HCT116 (cell line): ENCODE measurements at regions of chr12 and their contacts with region 1.

Region 1: GRCh38 chr12:114668151-114668885 is 15.7 kb downstream of the TBX3 start:
- DNase-seq: peak; percentile 61
- ATAC-seq: peak; percentile 96
- H3K4me3 ChIP-seq: peak overlapping the region; percentile 35 to 54
- H3K27ac ChIP-seq: no peak overlapping the region
- H3K4me1 ChIP-seq: peaks cover 2 to 13% of the 10 kb centered on the region in 2 experiments; a peak in 2 of 4 replicates
- H3K27me3 ChIP-seq: no peaks in the 10 kb centered on the region
- CTCF ChIP-seq: peak; percentile 54 to 69 (median 58)
- POLR2A ChIP-seq: no peak
- RAD21 ChIP-seq: peak; percentile 93

Region 2: GRCh38 chr12:115398311-115398781 is 730.0 kb after region 1 on chr12:
- CTCF ChIA-PET with region 1: no interaction called
- POLR2A ChIA-PET with region 1: no interaction called
- RAD21 ChIA-PET with region 1: no interaction called
- intact Hi-C with region 1: loop called (anchors 5 kb)
- DNase-seq: no peak
- ATAC-seq: peak; percentile 54
- H3K4me3 ChIP-seq: no peak overlapping the region
- H3K27ac ChIP-seq: no peak overlapping the region
- H3K4me1 ChIP-seq: no peaks in the 10 kb centered on the region
- H3K27me3 ChIP-seq: no peaks in the 10 kb centered on the region
- CTCF ChIP-seq: peak; percentile 8 to 72 (median 22); a peak in 5 of 6 replicates
- POLR2A ChIP-seq: no peak
- RAD21 ChIP-seq: peak; percentile 58

Region 3: GRCh38 chr12:115456946-115457689 is 788.8 kb after region 1 on chr12:
- CTCF ChIA-PET with region 1: no interaction called
- POLR2A ChIA-PET with region 1: no interaction called
- RAD21 ChIA-PET with region 1: interaction called in 1 of 2 experiments, 8 read pairs
- intact Hi-C with region 1: loop called (anchors 5 kb)
- DNase-seq: peak; percentile 24
- ATAC-seq: peak; percentile 86
- H3K4me3 ChIP-seq: no peak overlapping the region
- H3K27ac ChIP-seq: no peak overlapping the region
- H3K4me1 ChIP-seq: peaks cover 10% of the 10 kb centered on the region in 2 experiments; a peak in 2 of 4 replicates
- H3K27me3 ChIP-seq: no peaks in the 10 kb centered on the region
- CTCF ChIP-seq: peak; percentile 26 to 59 (median 43); a peak in 5 of 6 replicates
- POLR2A ChIP-seq: no peak
- RAD21 ChIP-seq: peak; percentile 67

Region 4: DNA sequence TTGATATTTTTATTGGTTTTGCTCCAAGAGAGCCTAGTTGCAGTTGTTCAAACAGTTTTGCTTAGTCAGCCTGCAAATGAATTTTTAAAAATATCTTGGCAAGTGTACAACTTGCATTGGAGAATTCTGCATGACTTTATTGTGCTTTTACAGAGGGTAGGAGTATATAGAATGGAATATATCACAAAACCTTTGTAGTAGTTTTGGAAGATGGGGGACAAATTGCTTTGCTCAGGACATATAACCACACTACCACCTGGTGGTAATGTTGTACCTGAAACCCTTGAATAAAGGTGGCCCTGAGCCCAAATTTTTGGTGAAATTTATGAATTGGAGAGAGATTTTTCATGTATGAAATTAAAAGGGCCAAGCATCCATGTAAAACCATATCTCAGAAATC is 964.0 kb after region 1 on chr12:
- CTCF ChIA-PET with region 1: no interaction called
- POLR2A ChIA-PET with region 1: no interaction called
- RAD21 ChIA-PET with region 1: no interaction called
- intact Hi-C with region 1: loop called (anchors 1 kb)
- DNase-seq: no peak
- ATAC-seq: no peak
- H3K4me3 ChIP-seq: no peak overlapping the region
- H3K27ac ChIP-seq: no peak overlapping the region
- H3K4me1 ChIP-seq: no peaks in the 10 kb centered on the region
- H3K27me3 ChIP-seq: no peaks in the 10 kb centered on the region
- CTCF ChIP-seq: peak; percentile 12 to 48 (median 47); a peak in 3 of 6 replicates
- POLR2A ChIP-seq: no peak
- RAD21 ChIP-seq: peak; percentile 70